ENCODE measurements at regions of chr7 and their contacts with region 1.

Region 1: GRCh38 chr7:128459394-128459878 is 3.8 kb downstream of the HILPDA start:
- DNase-seq: peak; percentile 44 to 56
- ATAC-seq: peak in 3 of 4 donors; percentile 49 to 54 (median 50)
- H3K4me3 ChIP-seq: no peak overlapping the region
- H3K27ac ChIP-seq: no peak overlapping the region
- H3K4me1 ChIP-seq: peaks cover 25% of the 10 kb centered on the region
- H3K27me3 ChIP-seq: no peaks in the 10 kb centered on the region
- CTCF ChIP-seq: peak; percentile 83

Region 2: GRCh38 chr7:128398016-128398840 is 61.2 kb before region 1 on chr7:
- intact Hi-C with region 1: loop called in 1 of 2 experiments (anchors 2 kb)
- DNase-seq: peak; percentile 49 to 75
- ATAC-seq: peak; percentile 72 to 87 (median 80)
- H3K4me3 ChIP-seq: no peak overlapping the region
- H3K27ac ChIP-seq: no peak overlapping the region
- H3K4me1 ChIP-seq: no peaks in the 10 kb centered on the region
- H3K27me3 ChIP-seq: no peaks in the 10 kb centered on the region
- CTCF ChIP-seq: peak; percentile 90

Region 3: GRCh38 chr7:128425850-128426249 is 33.6 kb before region 1 on chr7:
- intact Hi-C with region 1: loop called (anchors 1 to 2 kb)
- DNase-seq: peak; percentile 58 to 69
- ATAC-seq: peak; percentile 63 to 74 (median 70)
- H3K4me3 ChIP-seq: no peak overlapping the region
- H3K27ac ChIP-seq: no peak overlapping the region
- H3K4me1 ChIP-seq: no peaks in the 10 kb centered on the region
- H3K27me3 ChIP-seq: peaks cover 0 to 6% (median 0%) of the 10 kb centered on the region in 3 donors
- CTCF ChIP-seq: peak; percentile 82

Region 4: DNA sequence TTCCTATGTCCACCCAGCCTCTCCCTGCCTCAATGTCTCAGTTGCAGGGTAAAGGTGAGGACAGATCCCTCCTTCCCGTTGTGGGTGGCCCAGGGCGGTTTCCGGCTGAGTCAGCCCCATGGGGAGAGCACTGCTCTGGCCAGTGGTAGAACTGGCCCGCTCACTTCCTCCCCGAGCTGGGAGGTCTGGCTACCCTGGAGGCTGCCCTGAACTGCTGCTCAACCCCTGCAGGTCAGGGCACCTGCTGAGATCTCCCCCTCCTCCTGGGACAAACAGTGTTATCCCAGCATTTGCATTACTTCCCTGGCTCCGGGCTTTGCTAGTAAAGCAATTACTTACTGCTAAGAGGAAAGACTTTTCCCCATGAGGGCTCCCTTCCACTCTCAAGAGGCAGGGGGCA is 28.2 kb before region 1 on chr7:
- intact Hi-C with region 1: loop called (anchors 1 to 2 kb)
- DNase-seq: no peak
- ATAC-seq: peak in 1 of 4 donors; percentile 26
- H3K4me3 ChIP-seq: no peak overlapping the region
- H3K27ac ChIP-seq: no peak overlapping the region
- H3K4me1 ChIP-seq: no peaks in the 10 kb centered on the region
- H3K27me3 ChIP-seq: peaks cover 0 to 6% (median 0%) of the 10 kb centered on the region in 3 donors
- CTCF ChIP-seq: no peak